ENCODE measurements at regions of chr2 and their contacts with region 1.

Region 1: DNA sequence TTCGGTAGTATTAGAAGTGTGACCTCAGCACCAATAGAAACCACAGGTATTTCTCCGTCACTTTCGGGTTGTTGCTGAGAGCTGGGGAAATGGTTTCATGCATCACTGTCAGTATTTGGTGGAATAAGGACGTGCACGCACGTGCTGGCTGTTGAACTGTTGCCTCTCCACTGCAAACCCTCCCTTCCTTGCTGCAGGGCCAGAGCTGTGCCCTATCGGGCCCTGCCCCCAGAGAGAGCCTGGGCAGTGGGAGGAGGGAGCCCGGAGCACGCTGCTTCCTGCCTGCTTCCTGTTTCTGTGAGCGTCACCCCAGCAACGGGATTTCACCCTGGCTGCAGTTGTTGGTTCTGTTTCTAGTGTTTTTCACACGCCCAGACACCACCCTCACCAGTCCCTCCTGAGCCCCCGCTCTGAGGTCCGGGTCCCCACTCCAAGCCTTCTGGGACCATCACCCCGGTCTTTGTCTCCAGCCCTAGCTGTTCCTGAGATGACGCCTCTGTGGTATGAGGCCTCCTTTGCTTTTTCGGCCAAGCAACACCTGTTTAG is 47.4 kb downstream of the LRRFIP1 start:
- DNase-seq: peak; percentile 97
- ATAC-seq: peak; percentile 78
- H3K4me3 ChIP-seq: peak overlapping the region; percentile 38 to 72 (median 54)
- H3K4me3 Mint-ChIP-seq: peak overlapping the region; percentile 92
- H3K27ac ChIP-seq: peak overlapping the region; percentile 97 to 99
- H3K27ac Mint-ChIP-seq: peak overlapping the region; percentile 96
- H3K4me1 ChIP-seq: peaks cover 75 to 88% of the 10 kb centered on the region in 2 donors
- H3K4me1 Mint-ChIP-seq: peaks cover 84% of the 10 kb centered on the region
- H3K27me3 ChIP-seq: no peaks in the 10 kb centered on the region
- H3K27me3 Mint-ChIP-seq: no peaks in the 10 kb centered on the region
- CTCF ChIP-seq: no peak

Region 2: DNA sequence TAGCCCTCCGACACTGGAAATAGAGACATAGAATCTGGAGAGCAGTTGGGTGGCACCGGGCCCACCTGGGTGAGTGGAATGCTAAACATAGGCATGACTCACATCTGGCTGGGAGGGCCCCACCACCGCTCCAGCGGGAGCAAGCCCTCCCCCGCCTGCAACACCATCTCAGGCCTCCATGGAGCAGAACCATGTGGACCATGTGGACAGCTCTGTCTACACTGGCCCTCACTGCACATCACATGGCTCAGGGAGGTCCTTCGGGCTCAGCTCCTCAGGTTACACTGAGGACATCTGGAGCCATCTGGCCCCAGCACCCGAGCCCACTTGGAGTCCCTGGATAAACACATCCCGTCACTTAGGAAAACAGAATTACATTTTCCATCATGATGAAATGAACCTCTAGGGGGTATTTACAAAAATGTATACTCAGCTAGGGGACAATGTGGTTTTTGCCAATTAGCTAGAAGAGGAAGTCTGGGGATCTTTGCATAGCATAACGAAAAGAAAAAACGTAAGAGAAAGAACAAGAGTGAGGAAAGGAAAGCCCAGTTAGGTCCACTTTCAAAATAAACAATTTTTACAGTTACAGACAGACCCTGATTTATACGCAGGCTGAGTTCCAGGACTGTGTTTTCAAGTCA is 218.5 kb before region 1 on chr2:
- CTCF ChIA-PET with region 1: no interaction called
- POLR2A ChIA-PET with region 1: no interaction called
- intact Hi-C with region 1: no loop called
- DNase-seq: no peak
- ATAC-seq: no peak
- H3K4me3 ChIP-seq: no peak overlapping the region
- H3K4me3 Mint-ChIP-seq: no peak overlapping the region
- H3K27ac ChIP-seq: no peak overlapping the region
- H3K27ac Mint-ChIP-seq: no peak overlapping the region
- H3K4me1 ChIP-seq: no peaks in the 10 kb centered on the region
- H3K4me1 Mint-ChIP-seq: peaks cover 10% of the 10 kb centered on the region
- H3K27me3 ChIP-seq: no peaks in the 10 kb centered on the region
- H3K27me3 Mint-ChIP-seq: peaks cover 28% of the 10 kb centered on the region
- CTCF ChIP-seq: no peak

Region 3: DNA sequence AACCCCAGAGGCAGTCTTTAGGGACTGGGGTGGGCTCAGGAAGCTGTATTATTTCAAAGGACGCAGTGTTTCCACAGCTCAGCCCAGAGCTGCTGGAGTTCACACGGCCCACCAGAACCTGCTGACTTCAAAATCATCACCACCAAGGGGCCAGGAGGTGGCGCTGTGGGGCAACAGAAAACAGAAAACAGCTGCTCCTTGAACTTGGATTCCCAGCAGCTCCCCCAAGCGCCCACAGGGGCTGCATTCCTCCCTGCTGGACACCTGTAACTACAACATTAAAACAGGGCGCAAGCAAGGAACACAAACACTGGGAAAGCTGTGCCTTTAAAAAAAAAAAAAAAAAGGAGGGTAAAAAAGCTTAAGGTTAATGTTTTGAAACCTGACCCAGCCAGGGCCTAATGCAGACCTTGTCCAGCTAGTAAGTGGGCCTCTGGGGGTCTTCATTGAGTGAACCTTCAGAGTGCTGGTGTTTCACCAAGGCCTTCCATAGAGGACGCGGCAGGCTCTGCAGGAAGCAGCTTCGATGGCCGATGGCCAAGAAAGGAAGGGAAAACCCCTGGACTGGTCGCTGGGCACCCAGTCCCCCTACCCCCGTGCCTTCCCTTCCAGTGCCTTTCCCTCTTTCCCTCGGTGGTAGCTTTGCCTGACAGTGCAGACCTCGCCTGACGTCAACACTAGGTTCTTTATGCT is 161.9 kb before region 1 on chr2:
- CTCF ChIA-PET with region 1: interaction called, 22 read pairs
- POLR2A ChIA-PET with region 1: no interaction called
- intact Hi-C with region 1: no loop called
- DNase-seq: peak; percentile 84
- ATAC-seq: peak; percentile 86
- H3K4me3 ChIP-seq: no peak overlapping the region
- H3K4me3 Mint-ChIP-seq: no peak overlapping the region
- H3K27ac ChIP-seq: no peak overlapping the region
- H3K27ac Mint-ChIP-seq: no peak overlapping the region
- H3K4me1 ChIP-seq: no peaks in the 10 kb centered on the region
- H3K4me1 Mint-ChIP-seq: no peaks in the 10 kb centered on the region
- H3K27me3 ChIP-seq: peaks cover 0 to 7% (median 3%) of the 10 kb centered on the region in 4 experiments
- H3K27me3 Mint-ChIP-seq: peaks cover 13% of the 10 kb centered on the region
- CTCF ChIP-seq: peak; percentile 91

Region 4: DNA sequence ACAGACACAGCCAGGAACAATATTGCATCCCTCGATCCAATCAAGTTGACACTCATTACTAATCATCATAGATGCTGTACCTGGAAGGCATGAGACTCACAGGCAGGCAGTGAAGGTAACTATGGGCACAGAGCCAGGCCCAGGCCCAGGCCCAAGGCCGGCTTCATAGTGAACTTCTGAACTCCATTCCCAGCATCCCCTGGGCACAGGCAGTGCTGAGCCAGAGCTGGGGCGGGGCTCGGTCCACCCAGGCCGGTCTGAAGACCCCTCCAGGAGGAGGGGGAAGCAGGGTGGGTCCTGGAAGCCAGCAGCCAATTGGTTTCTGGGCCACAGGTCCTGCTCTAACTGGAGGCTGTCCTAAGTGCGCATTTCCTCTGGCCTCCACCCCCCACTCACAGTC is 150.2 kb before region 1 on chr2:
- CTCF ChIA-PET with region 1: no interaction called
- POLR2A ChIA-PET with region 1: no interaction called
- intact Hi-C with region 1: no loop called
- DNase-seq: no peak
- ATAC-seq: no peak
- H3K4me3 ChIP-seq: no peak overlapping the region
- H3K4me3 Mint-ChIP-seq: no peak overlapping the region
- H3K27ac ChIP-seq: no peak overlapping the region
- H3K27ac Mint-ChIP-seq: no peak overlapping the region
- H3K4me1 ChIP-seq: peaks cover 0 to 5% of the 10 kb centered on the region in 2 donors
- H3K4me1 Mint-ChIP-seq: peaks cover 2% of the 10 kb centered on the region
- H3K27me3 ChIP-seq: no peaks in the 10 kb centered on the region
- H3K27me3 Mint-ChIP-seq: no peaks in the 10 kb centered on the region
- CTCF ChIP-seq: no peak

Region 5: DNA sequence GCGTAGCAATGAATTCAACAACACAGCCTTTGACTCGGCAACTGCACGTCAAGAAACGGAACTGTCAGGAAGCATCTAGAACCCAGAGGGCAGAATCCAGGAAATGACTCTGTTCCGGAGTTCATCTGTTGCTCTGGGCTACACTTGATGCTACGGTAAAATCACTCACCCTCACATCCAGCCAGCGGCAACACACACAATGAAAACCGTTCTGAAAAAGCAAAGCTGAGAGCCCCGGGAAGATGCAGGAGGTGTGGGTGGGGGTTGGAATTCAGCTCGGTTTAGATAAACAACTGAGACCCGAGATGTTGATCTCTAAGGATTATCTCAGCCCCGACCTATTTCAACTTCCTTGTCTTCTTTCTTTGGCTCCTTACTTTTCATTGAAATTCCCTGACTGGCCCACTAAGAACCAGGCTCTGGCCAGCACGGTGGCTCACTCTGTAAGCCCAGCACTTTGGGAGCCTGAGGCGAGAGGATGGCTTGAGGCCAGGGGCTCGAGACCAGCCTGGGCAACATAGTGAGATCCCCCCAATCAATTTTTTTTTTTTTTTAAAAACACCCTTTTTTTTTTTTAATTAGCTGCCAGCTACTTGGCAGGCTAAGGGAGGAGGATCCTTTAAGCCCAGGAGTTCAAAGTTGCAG is 71.0 kb before region 1 on chr2:
- CTCF ChIA-PET with region 1: interaction called, 8 read pairs
- POLR2A ChIA-PET with region 1: interaction called, 3 read pairs
- intact Hi-C with region 1: loop called (anchors 1 kb)
- DNase-seq: peak; percentile 87
- ATAC-seq: peak; percentile 96
- H3K4me3 ChIP-seq: peak overlapping the region in 4 of 5 experiments; percentile 20 to 41 (median 39)
- H3K4me3 Mint-ChIP-seq: peak overlapping the region; percentile 81
- H3K27ac ChIP-seq: peak overlapping the region; percentile 75 to 90
- H3K27ac Mint-ChIP-seq: peak overlapping the region; percentile 90
- H3K4me1 ChIP-seq: peaks cover 19 to 21% of the 10 kb centered on the region in 2 donors
- H3K4me1 Mint-ChIP-seq: peaks cover 26% of the 10 kb centered on the region
- H3K27me3 ChIP-seq: no peaks in the 10 kb centered on the region
- H3K27me3 Mint-ChIP-seq: no peaks in the 10 kb centered on the region
- CTCF ChIP-seq: no peak

Region 6: GRCh38 chr2:237685408-237685807 is 10.6 kb after region 1 on chr2:
- CTCF ChIA-PET with region 1: interaction called, 350 read pairs
- POLR2A ChIA-PET with region 1: interaction called, 154 read pairs
- intact Hi-C with region 1: loop called (anchors 1 kb)
- DNase-seq: no peak
- ATAC-seq: no peak
- H3K4me3 ChIP-seq: no peak overlapping the region
- H3K4me3 Mint-ChIP-seq: no peak overlapping the region
- H3K27ac ChIP-seq: no peak overlapping the region
- H3K27ac Mint-ChIP-seq: peak overlapping the region; percentile 12
- H3K4me1 ChIP-seq: peaks cover 40 to 41% of the 10 kb centered on the region in 2 donors
- H3K4me1 Mint-ChIP-seq: peaks cover 49% of the 10 kb centered on the region
- H3K27me3 ChIP-seq: no peaks in the 10 kb centered on the region
- H3K27me3 Mint-ChIP-seq: no peaks in the 10 kb centered on the region
- CTCF ChIP-seq: no peak

Region 7: GRCh38 chr2:237708065-237708398 is 33.2 kb after region 1 on chr2:
- CTCF ChIA-PET with region 1: interaction called, 72 read pairs
- POLR2A ChIA-PET with region 1: interaction called, 3 read pairs
- intact Hi-C with region 1: no loop called
- DNase-seq: no peak
- ATAC-seq: no peak
- H3K4me3 ChIP-seq: no peak overlapping the region
- H3K4me3 Mint-ChIP-seq: no peak overlapping the region
- H3K27ac ChIP-seq: no peak overlapping the region
- H3K27ac Mint-ChIP-seq: no peak overlapping the region
- H3K4me1 ChIP-seq: peaks cover 25 to 46% of the 10 kb centered on the region in 2 donors
- H3K4me1 Mint-ChIP-seq: peaks cover 61% of the 10 kb centered on the region
- H3K27me3 ChIP-seq: no peaks in the 10 kb centered on the region
- H3K27me3 Mint-ChIP-seq: no peaks in the 10 kb centered on the region
- CTCF ChIP-seq: no peak

Region 8: GRCh38 chr2:237731663-237732062 is 56.9 kb after region 1 on chr2:
- CTCF ChIA-PET with region 1: interaction called, 27 read pairs
- POLR2A ChIA-PET with region 1: interaction called, 4 read pairs
- intact Hi-C with region 1: no loop called
- DNase-seq: no peak
- ATAC-seq: no peak
- H3K4me3 ChIP-seq: no peak overlapping the region
- H3K4me3 Mint-ChIP-seq: no peak overlapping the region
- H3K27ac ChIP-seq: no peak overlapping the region
- H3K27ac Mint-ChIP-seq: peak overlapping the region; percentile 26
- H3K4me1 ChIP-seq: peaks cover 3 to 8% of the 10 kb centered on the region in 2 donors
- H3K4me1 Mint-ChIP-seq: peaks cover 34% of the 10 kb centered on the region
- H3K27me3 ChIP-seq: no peaks in the 10 kb centered on the region
- H3K27me3 Mint-ChIP-seq: no peaks in the 10 kb centered on the region
- CTCF ChIP-seq: no peak

Region 9: GRCh38 chr2:238231251-238231793 is 556.5 kb after region 1 on chr2:
- CTCF ChIA-PET with region 1: no interaction called
- POLR2A ChIA-PET with region 1: no interaction called
- intact Hi-C with region 1: loop called (anchors 5 kb)
- DNase-seq: peak; percentile 86
- ATAC-seq: peak; percentile 77
- H3K4me3 ChIP-seq: peak overlapping the region; percentile 6 to 84 (median 67)
- H3K4me3 Mint-ChIP-seq: peak overlapping the region; percentile 94
- H3K27ac ChIP-seq: peak overlapping the region in 1 of 2 donors; percentile 35
- H3K27ac Mint-ChIP-seq: peak overlapping the region; percentile 15
- H3K4me1 ChIP-seq: peaks cover 7 to 18% of the 10 kb centered on the region in 2 donors
- H3K4me1 Mint-ChIP-seq: peaks cover 27% of the 10 kb centered on the region
- H3K27me3 ChIP-seq: peaks cover 0 to 17% (median 5%) of the 10 kb centered on the region in 4 experiments
- H3K27me3 Mint-ChIP-seq: peaks cover 31% of the 10 kb centered on the region
- CTCF ChIP-seq: no peak

Measured in B cell (primary cell).